ENCODE measurements at regions of chr5 and their contacts with region 1.

Region 1: DNA sequence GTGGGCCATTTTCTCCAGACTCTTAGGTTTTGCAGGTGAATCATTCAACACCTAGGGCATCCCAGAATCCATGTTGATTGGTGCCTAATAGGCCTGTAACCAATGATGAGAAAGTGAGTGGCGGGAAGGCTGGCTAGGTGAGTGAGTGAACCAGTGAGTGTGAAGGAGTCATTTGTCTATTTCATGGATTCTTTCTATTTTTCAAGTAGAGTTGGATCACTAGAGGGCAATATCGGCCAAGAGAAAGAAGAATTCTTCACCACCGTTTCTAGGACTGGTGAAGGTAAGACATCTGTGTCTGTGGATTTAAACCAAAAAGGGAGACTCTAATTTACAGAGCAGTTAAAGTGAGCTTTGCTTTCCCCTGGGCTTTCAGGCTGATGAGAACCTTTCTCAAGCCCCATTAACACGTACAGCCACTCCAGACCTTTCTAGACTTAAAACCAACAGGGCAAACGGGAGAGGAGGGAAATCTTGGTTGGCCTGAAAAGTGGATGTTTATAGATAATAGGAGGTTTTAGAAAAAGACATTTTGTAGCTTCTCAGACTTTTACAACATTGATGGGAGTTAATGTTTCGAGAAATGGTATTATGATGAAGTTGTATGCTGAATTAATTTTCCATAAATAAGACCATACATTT is 114.3 kb upstream of the IL12B start:
- DNase-seq: no peak
- ATAC-seq: no peak

Region 2: GRCh38 chr5:159504857-159505304 is 60.3 kb after region 1 on chr5:
- intact Hi-C with region 1: loop called (anchors 5 kb)
- DNase-seq: no peak
- ATAC-seq: peak; percentile 84

Region 3: GRCh38 chr5:159657771-159658170 is 213.2 kb after region 1 on chr5:
- intact Hi-C with region 1: loop called (anchors 10 kb)
- DNase-seq: no peak
- ATAC-seq: peak; percentile 36

Region 4: DNA sequence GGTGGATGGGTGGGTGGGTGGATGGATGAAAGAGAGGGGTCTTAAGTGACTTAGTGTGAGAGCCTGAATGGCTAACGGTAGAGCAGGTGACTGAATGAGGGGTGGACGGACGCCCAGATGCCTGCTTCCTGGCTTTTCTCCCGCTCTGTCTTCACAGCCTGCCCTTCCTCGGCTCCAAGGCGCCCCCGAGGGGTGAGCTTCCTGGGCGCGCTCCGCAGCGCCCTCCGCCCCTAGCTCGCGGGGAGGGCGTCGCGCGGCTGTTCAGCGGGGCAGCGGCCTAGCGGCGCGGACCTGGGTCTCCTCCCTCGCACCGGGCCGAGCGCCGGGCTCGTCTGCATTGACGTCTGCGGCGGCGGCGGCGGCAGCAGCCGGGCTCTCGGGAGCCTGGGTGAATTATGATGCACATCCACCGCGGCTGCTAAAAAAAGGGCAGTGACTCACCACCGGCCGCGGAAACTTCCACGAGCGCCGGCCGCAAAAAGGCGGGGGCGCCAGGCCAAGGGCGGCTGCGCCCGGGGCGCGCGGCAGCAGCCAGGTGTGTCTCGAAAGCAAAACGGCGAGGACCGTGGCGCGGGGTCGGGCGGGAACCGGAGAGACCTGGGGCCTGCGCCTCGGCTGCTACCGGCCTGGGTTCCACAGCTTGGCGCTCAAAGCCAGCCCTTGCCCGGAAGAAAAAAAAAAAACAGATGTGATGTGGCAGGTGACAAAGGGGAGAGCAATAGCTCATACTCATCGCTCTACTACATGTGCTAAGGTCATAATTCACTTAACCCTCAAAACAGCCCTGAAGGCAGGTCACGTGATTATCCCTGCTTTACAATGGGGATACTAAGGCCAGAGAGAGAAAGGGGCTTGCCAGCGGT is 328.7 kb after region 1 on chr5:
- intact Hi-C with region 1: loop called (anchors 10 kb)
- DNase-seq: peak; percentile 88
- ATAC-seq: peak; percentile 96

Region 5: GRCh38 chr5:159987031-159987674 is 542.6 kb after region 1 on chr5:
- intact Hi-C with region 1: loop called (anchors 5 kb)
- DNase-seq: peak; percentile 85
- ATAC-seq: peak; percentile 87

Measured in Right ventricle myocardium inferior (tissue), 1 donor.